CD8-positive, alpha-beta T cell (primary cell): ENCODE measurements at regions of chr11 and their contacts with region 1.

Region 1: DNA sequence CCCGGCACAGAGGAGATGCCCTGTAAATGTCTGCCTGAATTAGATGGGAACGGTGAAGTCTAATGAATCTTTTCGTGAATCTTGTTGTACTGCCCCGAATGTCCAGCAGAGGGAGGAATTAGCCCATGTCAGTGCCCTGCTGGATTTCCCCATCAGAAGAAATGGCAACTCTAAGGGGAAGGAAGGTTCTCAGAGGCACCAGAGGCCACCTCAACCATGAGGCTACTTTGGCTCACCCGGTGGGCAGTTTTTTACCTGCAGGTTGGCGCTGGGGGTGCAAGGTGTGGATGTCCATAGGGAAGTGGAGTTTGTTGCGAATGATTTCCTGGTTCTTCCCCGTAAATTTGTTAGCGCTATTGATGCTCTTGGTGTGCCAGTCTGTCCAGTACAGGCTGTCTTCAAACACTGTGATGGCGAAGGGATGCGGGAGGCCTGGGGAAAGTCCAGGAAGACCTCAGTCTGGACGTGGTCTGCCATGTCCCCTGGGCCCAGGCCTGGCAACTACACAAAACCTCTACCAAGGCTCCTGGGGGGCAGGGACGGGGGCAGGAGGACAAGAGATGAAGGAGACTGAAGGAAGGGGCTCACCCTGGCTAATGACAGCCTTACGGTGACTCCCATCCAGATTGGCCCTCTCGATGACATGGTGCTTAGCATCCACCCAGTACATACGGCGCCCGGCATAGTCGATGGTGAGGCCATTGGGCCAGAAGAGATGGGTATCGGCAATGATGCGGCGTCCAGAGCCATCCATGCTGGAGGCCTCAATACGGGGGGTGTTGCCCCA is 28.5 kb downstream of the LRP4 start:
- DNase-seq: peak; percentile 51 to 84 (median 78)
- ATAC-seq: peak; percentile 97
- H3K4me3 ChIP-seq: no peak overlapping the region
- H3K4me3 Mint-ChIP-seq: no peak overlapping the region
- H3K27ac ChIP-seq: no peak overlapping the region
- H3K27ac Mint-ChIP-seq: peak overlapping the region; percentile 60
- H3K4me1 ChIP-seq: no peaks in the 10 kb centered on the region
- H3K4me1 Mint-ChIP-seq: peaks cover 3% of the 10 kb centered on the region
- H3K27me3 ChIP-seq: no peaks in the 10 kb centered on the region
- H3K27me3 Mint-ChIP-seq: no peaks in the 10 kb centered on the region
- CTCF ChIP-seq: peak; percentile 80

Region 2: DNA sequence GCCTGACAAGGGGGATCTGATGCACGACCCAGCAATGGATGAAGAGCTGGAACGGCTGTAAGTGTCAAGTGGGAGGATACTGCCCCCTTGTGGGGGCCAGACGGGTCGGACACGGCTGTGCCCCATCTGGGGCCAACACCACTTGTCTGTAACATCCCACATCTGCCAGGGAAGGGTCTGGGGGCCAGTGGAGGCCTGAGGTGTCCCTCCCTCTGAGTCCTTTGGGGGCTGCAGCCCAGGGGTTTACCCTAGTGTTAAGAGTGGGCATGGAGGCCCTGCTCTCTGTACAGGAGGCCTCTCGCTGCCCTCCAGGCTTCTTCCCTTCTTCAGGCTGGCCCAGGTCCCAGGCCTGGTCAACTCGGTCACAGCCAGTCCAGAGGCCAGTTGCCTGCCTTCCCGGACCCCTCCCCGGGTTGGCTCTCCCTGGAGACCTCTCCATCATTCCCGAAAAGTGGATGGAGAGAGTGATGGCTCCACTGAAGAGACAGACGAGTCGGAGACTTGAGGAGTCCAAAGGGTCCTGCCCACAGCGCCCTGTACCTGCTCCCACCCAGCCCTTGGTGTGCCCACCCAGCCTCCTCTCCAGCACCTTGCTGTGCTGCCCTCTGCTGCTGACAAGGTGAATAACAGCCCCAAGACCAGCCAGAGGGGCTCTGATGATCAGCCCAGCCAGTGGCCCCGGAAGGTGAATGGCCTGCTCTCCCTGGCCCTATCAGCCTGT is 271.4 kb after region 1 on chr11:
- CTCF ChIA-PET with region 1: interaction called, 60 read pairs
- POLR2A ChIA-PET with region 1: no interaction called
- intact Hi-C with region 1: loop called (anchors 1 kb)
- DNase-seq: peak; percentile 41 to 78 (median 64)
- ATAC-seq: peak; percentile 82
- H3K4me3 ChIP-seq: no peak overlapping the region
- H3K4me3 Mint-ChIP-seq: no peak overlapping the region
- H3K27ac ChIP-seq: no peak overlapping the region
- H3K27ac Mint-ChIP-seq: no peak overlapping the region
- H3K4me1 ChIP-seq: peaks cover 3% of the 10 kb centered on the region
- H3K4me1 Mint-ChIP-seq: peaks cover 4% of the 10 kb centered on the region
- H3K27me3 ChIP-seq: no peaks in the 10 kb centered on the region
- H3K27me3 Mint-ChIP-seq: no peaks in the 10 kb centered on the region
- CTCF ChIP-seq: peak; percentile 58

Region 3: GRCh38 chr11:47259178-47259977 is 369.5 kb after region 1 on chr11:
- CTCF ChIA-PET with region 1: no interaction called
- POLR2A ChIA-PET with region 1: no interaction called
- intact Hi-C with region 1: loop called in 1 of 2 experiments (anchors 1 kb)
- DNase-seq: peak in 4 of 9 experiments; percentile 39 to 61 (median 48)
- ATAC-seq: peak; percentile 90
- H3K4me3 ChIP-seq: no peak overlapping the region
- H3K4me3 Mint-ChIP-seq: no peak overlapping the region
- H3K27ac ChIP-seq: no peak overlapping the region
- H3K27ac Mint-ChIP-seq: no peak overlapping the region
- H3K4me1 ChIP-seq: peaks cover 10% of the 10 kb centered on the region
- H3K4me1 Mint-ChIP-seq: peaks cover 10% of the 10 kb centered on the region
- H3K27me3 ChIP-seq: no peaks in the 10 kb centered on the region
- H3K27me3 Mint-ChIP-seq: no peaks in the 10 kb centered on the region
- CTCF ChIP-seq: peak; percentile 23

Region 4: DNA sequence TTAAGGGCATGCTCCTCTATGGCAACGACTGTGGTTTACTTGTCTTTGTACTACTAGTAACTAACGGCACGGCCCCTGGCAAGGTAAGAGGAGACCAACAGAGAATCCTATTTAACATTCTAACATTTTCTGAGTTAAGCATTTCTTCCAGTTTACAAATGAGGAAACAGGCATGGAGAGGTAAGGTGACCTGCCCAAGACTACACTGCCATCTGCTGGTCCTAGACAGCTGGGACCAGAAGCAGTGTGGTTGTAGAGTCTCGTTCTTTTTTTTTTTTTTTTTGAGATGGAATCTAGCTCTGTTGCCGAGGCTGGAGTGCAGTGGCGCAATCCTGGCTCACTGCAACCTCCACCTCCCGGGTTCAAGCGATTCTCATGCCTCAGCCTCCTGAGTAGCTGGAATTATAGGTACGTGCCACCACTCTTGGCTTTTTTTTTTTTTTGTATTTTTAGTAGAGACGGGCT is 564.3 kb after region 1 on chr11:
- CTCF ChIA-PET with region 1: no interaction called
- POLR2A ChIA-PET with region 1: no interaction called
- intact Hi-C with region 1: loop called (anchors 2 kb)
- DNase-seq: peak; percentile 36 to 86 (median 61)
- ATAC-seq: peak; percentile 93
- H3K4me3 ChIP-seq: no peak overlapping the region
- H3K4me3 Mint-ChIP-seq: no peak overlapping the region
- H3K27ac ChIP-seq: no peak overlapping the region
- H3K27ac Mint-ChIP-seq: no peak overlapping the region
- H3K4me1 ChIP-seq: no peaks in the 10 kb centered on the region
- H3K4me1 Mint-ChIP-seq: peaks cover 5% of the 10 kb centered on the region
- H3K27me3 ChIP-seq: no peaks in the 10 kb centered on the region
- H3K27me3 Mint-ChIP-seq: no peaks in the 10 kb centered on the region
- CTCF ChIP-seq: peak; percentile 71